ENCODE measurements at regions of chr7 and their contacts with region 1.

Region 1: DNA sequence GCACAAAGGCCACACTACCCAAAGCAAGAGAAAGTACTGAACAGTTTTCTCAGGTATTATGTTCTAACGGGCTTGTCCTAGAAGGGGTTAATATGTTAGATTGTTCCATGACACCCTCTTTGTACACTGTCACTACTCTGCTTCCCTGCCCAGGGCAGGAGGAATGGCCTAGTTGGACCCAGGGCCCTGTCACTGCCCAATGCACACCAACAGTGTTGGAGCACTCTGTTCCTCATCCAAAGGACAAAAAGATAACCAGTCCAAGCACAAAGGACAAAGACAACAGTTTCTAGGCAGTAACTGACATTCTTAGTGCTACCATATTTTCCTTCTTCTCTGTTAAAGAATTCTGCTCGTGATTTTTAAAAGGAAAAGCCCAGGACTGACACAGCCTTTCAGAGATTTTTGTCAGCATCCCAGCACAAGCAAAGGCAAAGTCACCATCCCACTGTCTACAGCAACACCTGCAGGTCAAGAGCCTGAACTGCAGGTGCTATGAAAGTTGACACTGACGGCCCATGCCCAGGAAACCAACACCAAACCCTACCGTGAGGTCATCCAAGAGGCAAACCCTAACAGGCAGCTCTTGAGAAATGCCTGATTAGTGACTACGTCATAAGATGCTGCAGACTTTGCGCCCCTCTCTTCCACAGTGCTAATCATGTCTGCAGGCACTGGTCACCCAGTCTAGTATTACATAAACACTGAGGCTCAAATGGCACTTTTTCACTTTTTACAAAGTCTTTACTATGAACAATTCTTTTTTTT is 13.2 kb downstream of the NUDCD3 start:
- DNase-seq: peak; percentile 33 to 83 (median 62)
- ATAC-seq: peak; percentile 99
- H3K4me3 ChIP-seq: no peak overlapping the region
- H3K4me3 Mint-ChIP-seq: no peak overlapping the region
- H3K27ac ChIP-seq: no peak overlapping the region
- H3K27ac Mint-ChIP-seq: peak overlapping the region; percentile 80
- H3K4me1 ChIP-seq: no peaks in the 10 kb centered on the region
- H3K4me1 Mint-ChIP-seq: peaks cover 51% of the 10 kb centered on the region
- H3K27me3 ChIP-seq: no peaks in the 10 kb centered on the region
- H3K27me3 Mint-ChIP-seq: no peaks in the 10 kb centered on the region
- CTCF ChIP-seq: peak; percentile 95

Region 2: GRCh38 chr7:44200647-44201461 is 276.4 kb before region 1 on chr7 and contains the start of gene YKT6:
- CTCF ChIA-PET with region 1: no interaction called
- POLR2A ChIA-PET with region 1: no interaction called
- intact Hi-C with region 1: loop called (anchors 5 to 10 kb)
- DNase-seq: peak; percentile 84 to 98 (median 95)
- ATAC-seq: peak; percentile 98
- H3K4me3 ChIP-seq: peak within 1 kb of the TSS; percentile 72 to 97
- H3K4me3 Mint-ChIP-seq: peak within 1 kb of the TSS; percentile 81
- H3K27ac ChIP-seq: peak within 1 kb of the TSS; percentile 65 to 78
- H3K27ac Mint-ChIP-seq: peak within 1 kb of the TSS; percentile 80
- H3K4me1 ChIP-seq: peaks cover 13% of the 10 kb centered on the region
- H3K4me1 Mint-ChIP-seq: peaks cover 34% of the 10 kb centered on the region
- H3K27me3 ChIP-seq: no peaks in the 10 kb centered on the region
- H3K27me3 Mint-ChIP-seq: peaks cover 5% of the 10 kb centered on the region
- CTCF ChIP-seq: peak; percentile 43
- total RNA-seq, gene YKT6: 111 to 114 TPM

Region 3: DNA sequence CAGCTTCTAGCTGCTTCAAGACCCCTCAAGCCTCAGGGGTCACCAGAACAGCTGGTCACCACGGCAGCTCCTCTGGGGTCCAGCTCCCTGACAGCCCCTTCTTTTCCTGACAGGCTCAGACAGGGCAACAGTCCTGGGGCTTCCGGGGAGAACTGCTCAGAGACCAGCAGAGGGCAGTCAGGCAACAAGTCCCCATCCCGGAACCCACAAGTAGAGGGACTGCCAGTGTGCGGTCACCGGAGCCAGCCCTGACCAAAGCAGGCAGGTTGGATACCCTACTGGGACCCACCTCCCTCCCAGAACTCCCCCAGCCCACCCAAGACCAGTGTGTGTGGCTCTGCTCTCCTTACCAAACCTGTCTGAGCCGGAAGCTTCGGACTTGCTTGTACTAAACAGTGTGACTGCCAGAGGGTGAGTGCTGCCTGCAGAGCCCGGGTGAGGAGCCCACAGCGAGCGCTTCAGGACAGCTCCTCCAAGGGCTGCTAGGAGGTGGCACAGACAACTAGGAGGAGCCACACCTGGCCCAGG is 236.2 kb before region 1 on chr7:
- CTCF ChIA-PET with region 1: interaction called, 19 read pairs
- POLR2A ChIA-PET with region 1: no interaction called
- intact Hi-C with region 1: loop called in 1 of 2 experiments (anchors 1 kb)
- DNase-seq: peak; percentile 15 to 77 (median 57)
- ATAC-seq: peak; percentile 86
- H3K4me3 ChIP-seq: no peak overlapping the region
- H3K4me3 Mint-ChIP-seq: peak overlapping the region; percentile 54
- H3K27ac ChIP-seq: no peak overlapping the region
- H3K27ac Mint-ChIP-seq: no peak overlapping the region
- H3K4me1 ChIP-seq: peaks cover 7% of the 10 kb centered on the region
- H3K4me1 Mint-ChIP-seq: no peaks in the 10 kb centered on the region
- H3K27me3 ChIP-seq: no peaks in the 10 kb centered on the region
- H3K27me3 Mint-ChIP-seq: no peaks in the 10 kb centered on the region
- CTCF ChIP-seq: peak; percentile 56

Region 4: GRCh38 chr7:44348300-44348699 is 128.9 kb before region 1 on chr7:
- CTCF ChIA-PET with region 1: no interaction called
- POLR2A ChIA-PET with region 1: no interaction called
- intact Hi-C with region 1: loop called (anchors 1 to 5 kb)
- DNase-seq: peak in 2 of 9 experiments; percentile 28 to 37
- ATAC-seq: no peak
- H3K4me3 ChIP-seq: no peak overlapping the region
- H3K4me3 Mint-ChIP-seq: no peak overlapping the region
- H3K27ac ChIP-seq: no peak overlapping the region
- H3K27ac Mint-ChIP-seq: no peak overlapping the region
- H3K4me1 ChIP-seq: no peaks in the 10 kb centered on the region
- H3K4me1 Mint-ChIP-seq: no peaks in the 10 kb centered on the region
- H3K27me3 ChIP-seq: no peaks in the 10 kb centered on the region
- H3K27me3 Mint-ChIP-seq: peaks cover 6% of the 10 kb centered on the region
- CTCF ChIP-seq: no peak

Region 5: DNA sequence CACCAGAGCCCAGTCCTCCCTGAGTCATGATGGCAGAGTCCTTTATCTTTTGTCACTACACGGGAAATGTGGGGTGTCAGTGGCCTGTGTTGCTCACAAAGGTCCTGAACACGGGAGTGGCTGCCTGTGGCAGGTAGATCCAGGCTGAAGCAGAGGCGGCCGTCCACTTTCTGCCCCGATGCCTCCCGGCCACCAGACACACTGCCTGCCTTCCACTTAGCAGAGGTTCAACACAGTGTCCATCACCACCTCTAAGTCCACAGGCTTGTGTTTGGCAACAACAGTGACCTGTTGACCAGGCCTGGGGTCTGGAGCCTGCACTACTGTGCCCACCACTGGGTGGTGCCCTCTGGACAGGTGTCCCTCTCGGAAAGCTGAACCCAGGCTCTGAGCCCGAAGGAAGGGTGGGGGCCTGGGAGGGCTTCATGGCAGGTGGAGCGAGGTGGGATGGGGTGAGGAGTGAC is 102.0 kb before region 1 on chr7:
- CTCF ChIA-PET with region 1: no interaction called
- POLR2A ChIA-PET with region 1: no interaction called
- intact Hi-C with region 1: loop called in 1 of 2 experiments (anchors 1 kb)
- DNase-seq: peak in 1 of 9 experiments; percentile 46
- ATAC-seq: no peak
- H3K4me3 ChIP-seq: no peak overlapping the region
- H3K4me3 Mint-ChIP-seq: no peak overlapping the region
- H3K27ac ChIP-seq: no peak overlapping the region
- H3K27ac Mint-ChIP-seq: no peak overlapping the region
- H3K4me1 ChIP-seq: no peaks in the 10 kb centered on the region
- H3K4me1 Mint-ChIP-seq: peaks cover 5% of the 10 kb centered on the region
- H3K27me3 ChIP-seq: no peaks in the 10 kb centered on the region
- H3K27me3 Mint-ChIP-seq: no peaks in the 10 kb centered on the region
- CTCF ChIP-seq: no peak

Region 6: DNA sequence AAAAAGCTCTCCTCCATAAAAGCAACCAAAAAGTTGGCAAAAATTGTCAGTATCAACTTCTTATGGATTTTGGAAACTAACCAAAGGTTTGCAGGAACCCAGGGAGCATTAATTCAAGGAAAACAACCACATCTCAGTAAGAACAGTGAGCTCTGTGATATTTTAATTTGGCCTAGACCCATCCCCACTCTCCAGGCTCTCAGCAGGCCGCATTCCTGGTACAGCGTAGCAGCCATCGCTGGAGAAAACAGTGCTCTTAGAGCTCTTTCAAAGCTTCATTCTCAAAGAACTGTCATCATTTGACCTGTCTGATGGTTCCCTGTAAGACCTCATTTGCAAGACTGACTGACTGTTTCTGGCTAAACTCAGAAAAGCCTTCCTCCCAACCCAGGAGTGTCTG is 68.7 kb before region 1 on chr7:
- CTCF ChIA-PET with region 1: interaction called, 3 read pairs
- POLR2A ChIA-PET with region 1: no interaction called
- intact Hi-C with region 1: loop called in 1 of 2 experiments (anchors 5 kb)
- DNase-seq: no peak
- ATAC-seq: no peak
- H3K4me3 ChIP-seq: no peak overlapping the region
- H3K4me3 Mint-ChIP-seq: no peak overlapping the region
- H3K27ac ChIP-seq: no peak overlapping the region
- H3K27ac Mint-ChIP-seq: peak overlapping the region; percentile 49
- H3K4me1 ChIP-seq: no peaks in the 10 kb centered on the region
- H3K4me1 Mint-ChIP-seq: peaks cover 26% of the 10 kb centered on the region
- H3K27me3 ChIP-seq: no peaks in the 10 kb centered on the region
- H3K27me3 Mint-ChIP-seq: no peaks in the 10 kb centered on the region
- CTCF ChIP-seq: no peak

Region 7: GRCh38 chr7:44431091-44431608 is 46.1 kb before region 1 on chr7:
- CTCF ChIA-PET with region 1: interaction called, 5 read pairs
- POLR2A ChIA-PET with region 1: no interaction called
- intact Hi-C with region 1: loop called (anchors 1 kb)
- DNase-seq: peak in 6 of 9 experiments; percentile 7 to 54 (median 40)
- ATAC-seq: peak; percentile 56
- H3K4me3 ChIP-seq: no peak overlapping the region
- H3K4me3 Mint-ChIP-seq: no peak overlapping the region
- H3K27ac ChIP-seq: no peak overlapping the region
- H3K27ac Mint-ChIP-seq: peak overlapping the region; percentile 89
- H3K4me1 ChIP-seq: no peaks in the 10 kb centered on the region
- H3K4me1 Mint-ChIP-seq: peaks cover 53% of the 10 kb centered on the region
- H3K27me3 ChIP-seq: no peaks in the 10 kb centered on the region
- H3K27me3 Mint-ChIP-seq: no peaks in the 10 kb centered on the region
- CTCF ChIP-seq: peak; percentile 50

Measured in CD8-positive, alpha-beta T cell (primary cell).